SK-N-SH (cell line): ENCODE measurements at regions of chr4 and their contacts with region 1.

Region 1: GRCh38 chr4:163544407-163545038 is 50.0 kb downstream of the TMA16 start:
- DNase-seq: peak; percentile 75
- H3K4me3 ChIP-seq: peak overlapping the region; percentile 34 to 54
- H3K27ac ChIP-seq: no peak overlapping the region
- H3K4me1 ChIP-seq: peaks cover 0 to 13% of the 10 kb centered on the region in 2 experiments; a peak in 3 of 4 replicates
- H3K27me3 ChIP-seq: no peaks in the 10 kb centered on the region
- CTCF ChIP-seq: peak; percentile 94
- EP300 ChIP-seq: no peak
- RAD21 ChIP-seq: peak; percentile 73

Region 2: DNA sequence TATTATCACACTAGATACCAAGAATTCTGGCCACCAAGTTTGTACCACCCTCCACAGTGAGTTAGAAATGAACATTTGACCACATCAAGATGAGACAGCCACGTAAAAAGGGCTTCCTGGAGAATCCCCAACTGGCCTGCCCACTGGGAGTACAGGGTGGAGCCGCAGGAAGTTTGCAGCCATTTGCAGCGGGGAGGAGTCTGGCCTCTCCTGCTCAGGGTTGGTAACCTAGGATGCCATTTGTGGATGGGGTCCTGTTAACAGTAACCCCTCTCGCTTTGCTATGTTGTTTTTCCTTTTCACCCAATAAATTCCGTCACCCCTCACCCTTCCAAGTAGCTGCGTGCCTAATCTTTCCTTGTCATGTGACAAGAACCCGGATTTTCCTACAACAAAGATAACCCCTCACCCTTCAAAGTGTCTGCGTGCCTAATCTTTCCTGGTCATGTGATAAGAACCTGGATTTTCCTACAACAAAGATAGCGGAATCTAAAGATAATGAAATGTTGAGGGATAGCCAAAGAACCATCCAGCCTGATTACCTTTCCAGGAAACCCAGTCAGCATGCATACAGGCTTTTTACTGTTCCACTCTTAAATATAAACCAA is 623.2 kb before region 1 on chr4:
- CTCF ChIA-PET with region 1: no interaction called
- POLR2A ChIA-PET with region 1: no interaction called
- DNase-seq: no peak
- H3K4me3 ChIP-seq: no peak overlapping the region
- H3K27ac ChIP-seq: no peak overlapping the region
- H3K4me1 ChIP-seq: no peaks in the 10 kb centered on the region
- H3K27me3 ChIP-seq: no peaks in the 10 kb centered on the region; the same call in 1 of the 2 replicates
- CTCF ChIP-seq: no peak
- EP300 ChIP-seq: no peak
- RAD21 ChIP-seq: no peak

Region 3: GRCh38 chr4:163470391-163470790 is 74.1 kb before region 1 on chr4:
- CTCF ChIA-PET with region 1: interaction called, 50 read pairs
- POLR2A ChIA-PET with region 1: no interaction called
- DNase-seq: no peak
- H3K4me3 ChIP-seq: no peak overlapping the region
- H3K27ac ChIP-seq: no peak overlapping the region
- H3K4me1 ChIP-seq: no peaks in the 10 kb centered on the region
- H3K27me3 ChIP-seq: peaks cover 27% of the 10 kb centered on the region; the same call in 1 of the 2 replicates
- CTCF ChIP-seq: no peak
- EP300 ChIP-seq: no peak
- RAD21 ChIP-seq: no peak

Region 4: GRCh38 chr4:163484906-163485305 is 59.6 kb before region 1 on chr4:
- CTCF ChIA-PET with region 1: interaction called, 94 read pairs
- POLR2A ChIA-PET with region 1: no interaction called
- DNase-seq: peak; percentile 63
- H3K4me3 ChIP-seq: peak overlapping the region in 1 of 2 experiments; percentile 50; a peak in 1 of 4 replicates
- H3K27ac ChIP-seq: no peak overlapping the region
- H3K4me1 ChIP-seq: no peaks in the 10 kb centered on the region
- H3K27me3 ChIP-seq: peaks cover 18% of the 10 kb centered on the region; the same call in 1 of the 2 replicates
- CTCF ChIP-seq: peak; percentile 76
- EP300 ChIP-seq: no peak
- RAD21 ChIP-seq: peak; percentile 81

Region 5: GRCh38 chr4:163505374-163505773 is 39.1 kb before region 1 on chr4:
- CTCF ChIA-PET with region 1: interaction called, 10 read pairs
- POLR2A ChIA-PET with region 1: no interaction called
- DNase-seq: no peak
- H3K4me3 ChIP-seq: no peak overlapping the region
- H3K27ac ChIP-seq: no peak overlapping the region
- H3K4me1 ChIP-seq: no peaks in the 10 kb centered on the region; a peak in 2 of 4 replicates
- H3K27me3 ChIP-seq: no peaks in the 10 kb centered on the region
- CTCF ChIP-seq: no peak
- EP300 ChIP-seq: no peak
- RAD21 ChIP-seq: no peak

Region 6: DNA sequence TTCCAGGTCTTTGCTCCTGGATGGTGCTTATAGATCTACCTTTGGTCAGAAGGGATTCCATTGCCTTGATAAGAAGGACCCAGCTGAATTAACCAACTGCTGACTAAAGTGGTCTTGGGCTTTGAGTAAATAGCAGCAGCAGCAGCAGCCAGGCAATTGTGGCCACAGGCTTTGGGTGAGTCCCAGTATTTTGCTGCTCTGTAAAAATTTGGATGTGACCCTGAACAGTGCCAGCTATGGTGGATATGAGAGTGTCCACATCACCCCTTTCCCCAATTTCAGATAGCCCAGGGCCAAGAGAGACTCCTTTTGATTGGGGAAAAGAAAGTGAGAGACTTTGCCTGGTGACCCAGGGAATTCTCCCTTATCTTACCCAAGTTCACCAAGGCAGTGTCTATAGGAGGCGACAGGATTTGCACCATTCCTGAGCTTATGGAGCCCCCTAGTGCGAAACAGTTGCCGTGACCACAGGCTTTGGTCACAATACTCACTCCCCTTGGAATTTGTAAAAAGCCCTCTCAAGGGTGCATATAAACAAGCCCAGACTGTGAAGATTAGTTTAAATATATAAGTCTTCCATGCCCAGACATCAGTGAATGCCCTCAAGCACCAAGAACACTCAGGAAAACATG is 468.0 kb after region 1 on chr4:
- CTCF ChIA-PET with region 1: interaction called, 38 read pairs
- POLR2A ChIA-PET with region 1: no interaction called
- DNase-seq: peak; percentile 12
- H3K4me3 ChIP-seq: peak overlapping the region in 1 of 2 experiments; percentile 40; a peak in 1 of 4 replicates
- H3K27ac ChIP-seq: no peak overlapping the region
- H3K4me1 ChIP-seq: no peaks in the 10 kb centered on the region
- H3K27me3 ChIP-seq: no peaks in the 10 kb centered on the region
- CTCF ChIP-seq: peak; percentile 50
- EP300 ChIP-seq: no peak
- RAD21 ChIP-seq: peak; percentile 74